Calu3 (cell line): ENCODE measurements at regions of chr14 and their contacts with region 1.

Region 1: GRCh38 chr14:96100161-96101029 is 61.2 kb downstream of the C14orf132 start:
- DNase-seq: peak; percentile 88
- H3K4me3 Mint-ChIP-seq: no peak overlapping the region
- H3K27ac Mint-ChIP-seq: no peak overlapping the region
- H3K4me1 Mint-ChIP-seq: peaks cover 6% of the 10 kb centered on the region
- H3K27me3 Mint-ChIP-seq: peaks cover 12% of the 10 kb centered on the region
- CTCF ChIP-seq: peak; percentile 90

Region 2: GRCh38 chr14:95561001-95561412 is 539.4 kb before region 1 on chr14:
- CTCF ChIA-PET with region 1: no interaction called
- intact Hi-C with region 1: loop called (anchors 5 kb)
- DNase-seq: peak; percentile 90
- H3K4me3 Mint-ChIP-seq: peak overlapping the region; percentile 33
- H3K27ac Mint-ChIP-seq: no peak overlapping the region
- H3K4me1 Mint-ChIP-seq: peaks cover 7% of the 10 kb centered on the region
- H3K27me3 Mint-ChIP-seq: peaks cover 16% of the 10 kb centered on the region
- CTCF ChIP-seq: peak; percentile 88

Region 3: GRCh38 chr14:95895720-95896119 is 204.7 kb before region 1 on chr14:
- CTCF ChIA-PET with region 1: interaction called, 3 read pairs
- intact Hi-C with region 1: loop called (anchors 10 kb)
- DNase-seq: peak; percentile 53
- H3K4me3 Mint-ChIP-seq: no peak overlapping the region
- H3K27ac Mint-ChIP-seq: no peak overlapping the region
- H3K4me1 Mint-ChIP-seq: no peaks in the 10 kb centered on the region
- H3K27me3 Mint-ChIP-seq: peaks cover 97% of the 10 kb centered on the region
- CTCF ChIP-seq: peak; percentile 47

Region 4: DNA sequence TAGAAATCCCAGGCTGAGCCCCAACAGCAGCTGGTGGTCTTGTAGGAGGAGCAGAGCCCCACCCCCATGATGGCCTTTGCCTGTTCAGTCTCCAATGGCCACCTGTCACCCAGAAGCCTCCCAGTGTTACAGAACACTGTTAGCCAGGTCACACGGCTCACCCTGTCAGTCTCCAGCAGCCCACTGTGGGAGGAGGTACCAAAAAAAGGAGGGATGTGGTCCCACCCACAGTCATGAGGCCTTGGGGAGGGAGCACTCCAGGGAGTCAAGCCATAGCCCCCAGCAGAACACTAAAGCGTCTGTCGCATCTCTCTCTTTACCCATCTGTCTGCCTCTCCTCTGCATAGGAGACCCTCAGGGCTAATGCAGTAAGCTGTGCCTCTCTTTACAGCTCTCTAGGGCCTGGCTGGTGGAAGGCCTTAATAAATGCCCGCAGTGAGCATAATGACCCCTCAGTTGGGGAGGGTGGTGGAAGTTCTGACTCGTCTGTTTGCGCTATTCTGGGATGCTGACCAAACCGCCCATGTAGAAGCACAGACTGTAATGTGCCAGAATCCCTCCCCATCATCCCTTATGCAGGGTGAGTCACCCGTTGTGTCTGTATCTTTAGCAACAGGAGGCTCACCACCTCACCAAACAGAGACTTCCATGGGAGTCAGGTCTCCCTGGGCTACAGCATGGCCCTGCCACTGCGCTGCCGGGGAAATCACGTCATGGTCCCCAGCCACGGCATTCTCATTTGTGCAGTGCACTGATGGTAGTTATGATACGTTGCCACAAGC is 46.6 kb before region 1 on chr14:
- CTCF ChIA-PET with region 1: interaction called, 17 read pairs
- intact Hi-C with region 1: loop called (anchors 1 kb)
- DNase-seq: no peak
- H3K4me3 Mint-ChIP-seq: no peak overlapping the region
- H3K27ac Mint-ChIP-seq: no peak overlapping the region
- H3K4me1 Mint-ChIP-seq: no peaks in the 10 kb centered on the region
- H3K27me3 Mint-ChIP-seq: peaks cover 37% of the 10 kb centered on the region
- CTCF ChIP-seq: no peak

Region 5: GRCh38 chr14:96204151-96205058 is 104.0 kb after region 1 on chr14 and contains the start of gene BDKRB2:
- CTCF ChIA-PET with region 1: interaction called, 5 read pairs
- intact Hi-C with region 1: loop called (anchors 10 kb)
- DNase-seq: peak; percentile 72
- H3K4me3 Mint-ChIP-seq: peak within 1 kb of the TSS; percentile 63
- H3K27ac Mint-ChIP-seq: peak within 1 kb of the TSS; percentile 45
- H3K4me1 Mint-ChIP-seq: peaks cover 16% of the 10 kb centered on the region
- H3K27me3 Mint-ChIP-seq: peaks cover 40% of the 10 kb centered on the region
- CTCF ChIP-seq: no peak
- total RNA-seq, gene BDKRB2: 0.27 and 0.28 TPM in 2 replicates

Region 6: GRCh38 chr14:96275177-96276112 is 175.1 kb after region 1 on chr14:
- CTCF ChIA-PET with region 1: interaction called, 26 read pairs
- intact Hi-C with region 1: loop called (anchors 1 kb)
- DNase-seq: peak; percentile 82
- H3K4me3 Mint-ChIP-seq: no peak overlapping the region
- H3K27ac Mint-ChIP-seq: no peak overlapping the region
- H3K4me1 Mint-ChIP-seq: peaks cover 7% of the 10 kb centered on the region
- H3K27me3 Mint-ChIP-seq: no peaks in the 10 kb centered on the region
- CTCF ChIP-seq: peak; percentile 91

Region 7: GRCh38 chr14:96400495-96400894 is 300.1 kb after region 1 on chr14:
- CTCF ChIA-PET with region 1: no interaction called
- intact Hi-C with region 1: no loop called
- DNase-seq: no peak
- H3K4me3 Mint-ChIP-seq: no peak overlapping the region
- H3K27ac Mint-ChIP-seq: no peak overlapping the region
- H3K4me1 Mint-ChIP-seq: no peaks in the 10 kb centered on the region
- H3K27me3 Mint-ChIP-seq: no peaks in the 10 kb centered on the region
- CTCF ChIP-seq: no peak

Region 8: DNA sequence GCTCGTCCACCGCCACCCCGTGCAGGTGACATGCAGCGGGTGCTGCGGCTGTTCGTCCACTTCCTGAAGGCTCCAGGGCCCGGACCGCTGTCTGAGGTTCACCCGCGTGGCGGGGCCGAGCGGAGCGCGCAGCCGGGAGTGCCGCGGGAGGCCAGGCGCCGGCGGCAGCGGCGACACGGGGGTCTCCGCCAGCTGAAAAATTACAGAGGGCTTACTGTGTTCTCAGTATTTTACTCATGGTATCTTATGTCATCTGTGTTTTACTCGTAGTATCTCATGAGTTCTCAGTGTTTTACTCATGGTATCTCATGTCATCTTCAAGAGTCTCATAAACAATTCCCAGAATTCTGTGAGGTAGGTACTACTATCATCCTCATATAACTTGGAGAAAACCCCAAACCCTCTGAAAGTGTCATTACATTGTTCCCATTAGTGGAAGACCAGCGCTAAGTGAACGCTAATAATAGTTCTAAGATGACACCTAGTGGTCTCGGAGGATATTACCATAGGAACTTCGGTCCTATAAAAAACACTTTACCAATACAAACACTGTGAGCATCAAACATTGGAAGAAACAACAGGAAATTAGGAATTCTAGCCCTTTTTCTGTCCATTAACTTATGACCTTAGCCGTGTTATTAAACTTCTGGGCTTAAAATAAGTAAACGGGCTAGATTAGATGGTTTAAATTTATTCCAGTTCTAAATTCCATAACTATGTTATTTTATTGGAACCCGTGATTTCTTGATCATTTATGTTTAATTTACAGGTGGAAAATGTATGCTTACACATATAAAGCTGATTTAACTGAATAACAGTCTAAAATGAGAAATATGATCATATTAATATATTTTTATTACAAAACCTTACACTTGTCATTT is 324.0 kb after region 1 on chr14:
- CTCF ChIA-PET with region 1: no interaction called
- intact Hi-C with region 1: loop called (anchors 1 kb)
- DNase-seq: peak; percentile 41
- H3K4me3 Mint-ChIP-seq: peak overlapping the region; percentile 56
- H3K27ac Mint-ChIP-seq: no peak overlapping the region
- H3K4me1 Mint-ChIP-seq: no peaks in the 10 kb centered on the region
- H3K27me3 Mint-ChIP-seq: no peaks in the 10 kb centered on the region
- CTCF ChIP-seq: peak; percentile 30

Region 9: DNA sequence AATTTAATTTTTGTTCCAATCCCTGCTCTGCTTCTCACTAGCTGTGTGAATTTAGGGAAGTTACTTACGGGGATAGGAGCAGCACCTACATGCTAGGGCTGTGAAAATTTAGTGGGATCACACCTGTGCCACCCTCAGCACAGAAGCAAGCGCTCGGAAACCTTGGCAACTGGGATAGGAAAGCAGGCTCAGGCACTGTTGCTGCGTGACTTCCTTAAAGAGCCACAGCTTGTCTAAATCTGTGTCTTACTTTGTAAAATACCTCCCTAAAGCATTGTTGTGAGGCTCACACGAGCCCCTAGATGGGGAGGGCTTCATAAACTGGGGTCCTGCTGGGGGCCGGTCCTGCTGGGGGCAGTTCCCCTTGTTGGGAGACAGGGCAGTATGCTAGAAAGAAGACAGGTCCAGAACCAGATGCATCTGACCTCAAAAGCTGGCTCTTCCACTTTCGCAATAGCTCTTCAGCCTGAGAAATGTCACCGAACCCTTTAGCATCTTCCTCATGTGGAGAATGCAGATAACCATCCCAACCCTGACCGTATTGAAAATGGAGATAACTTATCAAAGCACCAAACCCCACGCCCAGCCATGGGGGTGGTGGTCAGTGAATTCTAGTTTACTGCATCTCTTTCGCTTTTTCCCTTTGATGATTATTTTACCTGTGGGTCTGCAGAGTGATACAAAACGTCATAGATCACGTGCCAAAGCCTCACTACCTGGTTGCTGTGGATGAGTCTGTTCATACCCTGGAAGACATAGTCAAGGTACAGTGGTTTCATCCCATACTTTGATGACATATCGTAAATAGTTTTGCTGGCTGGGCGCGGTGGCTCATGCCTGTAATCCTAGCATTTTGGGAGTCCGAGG is 345.7 kb after region 1 on chr14:
- CTCF ChIA-PET with region 1: no interaction called
- intact Hi-C with region 1: no loop called
- DNase-seq: no peak
- H3K4me3 Mint-ChIP-seq: no peak overlapping the region
- H3K27ac Mint-ChIP-seq: no peak overlapping the region
- H3K4me1 Mint-ChIP-seq: no peaks in the 10 kb centered on the region
- H3K27me3 Mint-ChIP-seq: no peaks in the 10 kb centered on the region
- CTCF ChIP-seq: no peak